AG04450 (cell line): ENCODE measurements at regions of chr20 and their contacts with region 1.

Region 1: DNA sequence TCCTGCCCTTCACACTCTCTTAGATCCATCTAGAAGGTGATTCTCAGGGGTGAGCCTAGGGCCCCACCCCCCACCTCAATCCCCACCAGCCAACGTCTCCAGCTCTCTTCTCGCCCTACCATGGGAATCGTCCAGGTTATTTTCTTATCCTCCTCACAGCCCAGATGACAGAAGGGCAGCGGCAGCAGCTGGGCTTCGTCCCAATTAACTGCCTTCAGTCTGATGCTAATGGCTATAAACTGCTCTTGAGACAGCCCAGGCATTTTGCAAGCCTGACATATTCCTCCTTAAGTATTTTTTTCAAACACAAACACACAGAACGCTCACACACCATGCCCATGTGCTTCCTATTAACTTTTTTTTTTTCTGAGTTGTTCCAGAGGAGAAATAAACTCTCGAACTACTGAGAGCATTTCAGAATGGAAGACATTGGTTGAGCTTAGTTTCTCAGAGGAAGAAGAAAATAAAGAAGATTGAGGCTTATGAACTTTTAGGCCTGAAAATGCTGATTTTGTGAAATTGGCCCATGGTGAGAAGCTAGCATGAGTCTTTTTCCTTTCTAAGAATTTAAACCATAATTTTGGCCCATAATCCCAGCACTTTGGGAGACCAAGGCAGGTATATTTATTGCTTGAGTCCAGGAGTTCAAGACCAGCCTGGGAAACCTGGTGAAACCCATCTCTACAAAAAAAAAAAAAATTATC is 124.6 kb downstream of the EYA2 start:
- DNase-seq: peak; percentile 88
- H3K4me3 ChIP-seq: no peak overlapping the region
- H3K27ac ChIP-seq: peak overlapping the region; percentile 47
- H3K27me3 ChIP-seq: no peaks in the 10 kb centered on the region
- CTCF ChIP-seq: no peak

Region 2: GRCh38 chr20:46767127-46767761 is 252.0 kb before region 1 on chr20:
- CTCF ChIA-PET with region 1: interaction called, 10 read pairs
- POLR2A ChIA-PET with region 1: no interaction called
- DNase-seq: no peak
- H3K4me3 ChIP-seq: no peak overlapping the region
- H3K27ac ChIP-seq: no peak overlapping the region
- H3K27me3 ChIP-seq: peaks cover 2% of the 10 kb centered on the region
- CTCF ChIP-seq: peak; percentile 66

Region 3: GRCh38 chr20:46954490-46955038 is 64.7 kb before region 1 on chr20:
- CTCF ChIA-PET with region 1: no interaction called
- POLR2A ChIA-PET with region 1: interaction called, 12 read pairs
- DNase-seq: peak; percentile 97
- H3K4me3 ChIP-seq: peak overlapping the region; percentile 50
- H3K27ac ChIP-seq: peak overlapping the region; percentile 98
- H3K27me3 ChIP-seq: no peaks in the 10 kb centered on the region
- CTCF ChIP-seq: no peak

Region 4: GRCh38 chr20:47008842-47009508 is 10.3 kb before region 1 on chr20:
- CTCF ChIA-PET with region 1: no interaction called
- POLR2A ChIA-PET with region 1: no interaction called
- DNase-seq: no peak
- H3K4me3 ChIP-seq: no peak overlapping the region
- H3K27ac ChIP-seq: no peak overlapping the region
- H3K27me3 ChIP-seq: no peaks in the 10 kb centered on the region
- CTCF ChIP-seq: no peak

Region 5: GRCh38 chr20:47125583-47126373 is 106.5 kb after region 1 on chr20:
- CTCF ChIA-PET with region 1: no interaction called
- POLR2A ChIA-PET with region 1: interaction called, 10 read pairs
- DNase-seq: no peak
- H3K4me3 ChIP-seq: no peak overlapping the region
- H3K27ac ChIP-seq: peak overlapping the region; percentile 40
- H3K27me3 ChIP-seq: no peaks in the 10 kb centered on the region
- CTCF ChIP-seq: no peak

Region 6: DNA sequence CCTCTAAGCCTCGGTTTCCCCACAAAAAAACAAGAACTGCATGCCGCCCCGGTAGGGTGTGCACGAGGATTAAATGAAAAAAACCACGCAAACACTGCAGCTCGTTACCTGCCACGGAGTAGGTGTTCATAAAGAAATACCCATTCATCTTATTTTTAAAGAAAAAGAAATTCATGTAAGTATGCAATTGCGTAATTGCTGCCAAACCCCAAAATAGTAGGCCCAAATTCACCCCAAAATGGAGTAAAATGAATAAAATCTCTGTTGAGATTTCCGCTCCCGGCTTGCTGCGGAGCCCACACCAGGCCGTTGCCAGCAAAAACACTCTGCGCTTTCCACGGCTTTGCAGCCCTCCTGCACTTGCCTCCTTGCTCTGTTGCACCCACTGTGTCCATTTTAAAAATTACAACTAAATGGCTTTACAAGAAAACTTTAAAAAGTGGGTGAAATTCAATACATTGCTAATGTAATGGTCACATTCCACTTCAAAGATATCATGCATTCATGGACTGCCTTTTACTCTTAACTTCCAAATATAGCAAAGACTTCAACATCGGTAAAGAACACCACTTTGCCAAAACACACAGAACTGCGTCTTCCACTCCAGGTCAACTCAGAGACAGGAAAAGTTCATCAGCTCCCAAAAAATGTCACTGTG is 212.2 kb after region 1 on chr20:
- CTCF ChIA-PET with region 1: no interaction called
- POLR2A ChIA-PET with region 1: no interaction called
- DNase-seq: peak; percentile 79
- H3K4me3 ChIP-seq: no peak overlapping the region
- H3K27ac ChIP-seq: peak overlapping the region; percentile 95
- H3K27me3 ChIP-seq: no peaks in the 10 kb centered on the region
- CTCF ChIP-seq: peak; percentile 56